ENCODE measurements at regions of chr14 and their contacts with region 1.

Region 1: DNA sequence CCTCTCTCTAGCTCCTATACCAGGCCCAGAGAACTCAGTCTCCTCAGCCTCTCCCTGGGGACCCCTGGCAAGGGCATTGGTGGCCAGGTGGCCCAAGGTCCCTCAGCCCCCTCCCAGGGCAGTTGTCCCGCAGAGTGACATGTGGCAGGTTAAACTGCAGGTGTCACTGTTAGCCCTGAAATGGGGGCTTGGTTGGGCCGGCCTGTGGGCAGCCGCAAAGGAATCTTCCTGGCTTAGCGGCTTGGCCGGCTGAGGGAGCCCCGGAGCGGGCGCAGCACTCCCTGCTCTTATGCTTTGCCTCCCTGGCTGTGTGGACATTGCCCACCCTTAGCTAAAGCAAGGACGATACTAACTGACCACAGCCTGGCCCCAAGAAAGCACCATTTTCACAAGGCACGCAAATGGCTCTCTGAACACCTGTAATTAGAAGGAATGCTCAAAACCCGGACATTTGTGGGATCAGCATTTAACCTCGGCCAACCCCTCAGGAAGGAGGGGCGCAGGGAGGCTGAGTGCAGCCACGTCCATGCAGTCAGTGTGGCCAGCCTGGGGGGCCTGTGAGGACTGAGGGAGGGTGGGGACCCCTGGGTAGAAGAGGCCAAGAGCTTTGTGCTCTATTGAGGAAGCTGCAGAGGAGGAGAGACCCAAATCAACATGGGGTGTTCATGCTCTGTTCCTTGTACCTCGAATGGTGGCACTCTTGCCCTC is 82.2 kb downstream of the PAPOLA start:
- DNase-seq: peak; percentile 43 to 85
- H3K4me3 ChIP-seq: no peak overlapping the region
- H3K27ac ChIP-seq: no peak overlapping the region
- H3K4me1 ChIP-seq: peaks cover 0 to 6% (median 0%) of the 10 kb centered on the region in 4 experiments; a peak in 2 of 7 replicates
- H3K27me3 ChIP-seq: peaks cover 0 to 3% (median 0%) of the 10 kb centered on the region in 4 experiments; a peak in 1 of 7 replicates
- CTCF ChIP-seq: peak; percentile 79 to 98 (median 93)
- EP300 ChIP-seq: no peak
- POLR2A ChIP-seq: no peak
- RAD21 ChIP-seq: peak; percentile 100

Region 2: DNA sequence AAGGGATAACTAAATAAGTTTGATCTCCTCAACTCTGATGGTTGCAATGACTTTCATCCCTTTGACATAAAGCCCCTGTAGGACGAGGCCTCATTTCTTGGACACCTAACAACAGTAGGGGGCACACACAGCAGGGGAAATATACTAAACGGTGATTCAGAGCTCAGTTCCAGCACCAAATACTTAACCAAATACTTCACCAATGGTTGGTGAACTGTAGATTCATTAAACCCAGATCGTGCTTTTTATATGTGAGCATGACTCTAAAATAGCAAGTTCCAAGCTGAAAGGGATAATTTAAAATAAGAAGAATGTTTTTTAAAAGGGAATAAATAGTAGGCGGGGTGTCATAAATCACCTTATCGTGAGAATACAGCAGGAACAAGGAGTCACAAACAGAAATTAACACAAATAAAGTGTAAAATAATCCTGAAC is 274.4 kb before region 1 on chr14:
- CTCF ChIA-PET with region 1: no interaction called
- POLR2A ChIA-PET with region 1: no interaction called
- DNase-seq: no peak
- H3K4me3 ChIP-seq: no peak overlapping the region
- H3K27ac ChIP-seq: no peak overlapping the region
- H3K4me1 ChIP-seq: no peaks in the 10 kb centered on the region
- H3K27me3 ChIP-seq: peaks cover 0 to 1% (median 0%) of the 10 kb centered on the region in 4 experiments; a peak in 1 of 7 replicates
- CTCF ChIP-seq: no peak
- EP300 ChIP-seq: no peak
- POLR2A ChIP-seq: no peak
- RAD21 ChIP-seq: no peak; a peak in 1 of 4 replicates

Region 3: GRCh38 chr14:96434040-96434787 is 150.1 kb before region 1 on chr14:
- CTCF ChIA-PET with region 1: no interaction called
- POLR2A ChIA-PET with region 1: no interaction called
- DNase-seq: no peak
- H3K4me3 ChIP-seq: no peak overlapping the region
- H3K27ac ChIP-seq: no peak overlapping the region
- H3K4me1 ChIP-seq: no peaks in the 10 kb centered on the region
- H3K27me3 ChIP-seq: no peaks in the 10 kb centered on the region
- CTCF ChIP-seq: no peak
- EP300 ChIP-seq: no peak
- POLR2A ChIP-seq: no peak
- RAD21 ChIP-seq: no peak

Region 4: GRCh38 chr14:96514694-96515093 is 69.7 kb before region 1 on chr14:
- CTCF ChIA-PET with region 1: no interaction called
- POLR2A ChIA-PET with region 1: no interaction called
- DNase-seq: no peak
- H3K4me3 ChIP-seq: no peak overlapping the region
- H3K27ac ChIP-seq: no peak overlapping the region
- H3K4me1 ChIP-seq: peaks cover 0 to 13% (median 5%) of the 10 kb centered on the region in 4 experiments; a peak in 6 of 7 replicates
- H3K27me3 ChIP-seq: no peaks in the 10 kb centered on the region
- CTCF ChIP-seq: no peak
- EP300 ChIP-seq: no peak
- POLR2A ChIP-seq: no peak
- RAD21 ChIP-seq: no peak

Region 5: DNA sequence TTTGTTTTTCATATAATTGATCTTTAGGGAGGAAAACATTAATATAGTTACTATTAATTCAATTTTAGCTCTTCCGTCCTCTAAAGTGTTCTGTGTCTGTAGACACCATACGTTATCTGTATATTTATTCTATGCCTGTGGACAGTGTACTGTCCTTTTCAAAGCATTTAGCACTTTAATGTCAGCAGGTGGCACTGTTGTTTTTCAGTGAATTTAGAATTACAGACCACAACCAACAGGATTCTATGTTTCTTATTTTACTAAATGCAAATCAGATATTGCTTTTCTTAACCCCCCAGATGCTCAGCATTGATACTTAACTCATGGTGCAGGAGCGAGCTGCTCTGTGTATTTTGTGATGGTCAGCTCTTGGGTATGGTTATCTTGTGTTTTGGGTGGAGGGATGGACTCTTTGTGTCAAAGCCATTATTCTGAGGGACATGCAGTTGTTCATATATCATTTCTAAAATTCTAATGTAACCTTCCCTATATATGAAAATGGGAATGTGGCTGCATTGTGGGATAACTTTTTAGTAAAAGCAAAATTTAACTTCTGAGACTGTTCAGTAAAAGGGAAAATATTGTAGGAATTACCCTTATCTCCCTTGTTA is 17.0 kb before region 1 on chr14:
- CTCF ChIA-PET with region 1: interaction called, 30 read pairs
- POLR2A ChIA-PET with region 1: interaction called, 13 read pairs
- DNase-seq: no peak
- H3K4me3 ChIP-seq: no peak overlapping the region
- H3K27ac ChIP-seq: no peak overlapping the region
- H3K4me1 ChIP-seq: peaks cover 2 to 5% (median 3%) of the 10 kb centered on the region in 4 experiments; a peak in 3 of 7 replicates
- H3K27me3 ChIP-seq: no peaks in the 10 kb centered on the region
- CTCF ChIP-seq: peak in 2 of 3 experiments; percentile 6 to 35; a peak in 2 of 4 replicates
- EP300 ChIP-seq: no peak
- POLR2A ChIP-seq: no peak
- RAD21 ChIP-seq: peak; percentile 28 to 37; a peak in 3 of 4 replicates

Region 6: GRCh38 chr14:96662116-96662970 is 78.0 kb after region 1 on chr14:
- CTCF ChIA-PET with region 1: interaction called, 72 read pairs
- POLR2A ChIA-PET with region 1: no interaction called
- DNase-seq: peak in 1 of 2 experiments; percentile 42
- H3K4me3 ChIP-seq: no peak overlapping the region
- H3K27ac ChIP-seq: no peak overlapping the region
- H3K4me1 ChIP-seq: peaks cover 0 to 11% (median 6%) of the 10 kb centered on the region in 4 experiments; a peak in 4 of 7 replicates
- H3K27me3 ChIP-seq: no peaks in the 10 kb centered on the region
- CTCF ChIP-seq: no peak
- EP300 ChIP-seq: no peak
- POLR2A ChIP-seq: no peak
- RAD21 ChIP-seq: no peak

Region 7: GRCh38 chr14:96676166-96676565 is 91.8 kb after region 1 on chr14:
- CTCF ChIA-PET with region 1: interaction called, 16 read pairs
- POLR2A ChIA-PET with region 1: no interaction called
- DNase-seq: no peak
- H3K4me3 ChIP-seq: no peak overlapping the region
- H3K27ac ChIP-seq: no peak overlapping the region
- H3K4me1 ChIP-seq: no peaks in the 10 kb centered on the region
- H3K27me3 ChIP-seq: peaks cover 2 to 20% (median 14%) of the 10 kb centered on the region in 4 experiments
- CTCF ChIP-seq: no peak
- EP300 ChIP-seq: no peak
- POLR2A ChIP-seq: no peak
- RAD21 ChIP-seq: no peak

Region 8: GRCh38 chr14:96741151-96741977 is 157.0 kb after region 1 on chr14:
- CTCF ChIA-PET with region 1: interaction called, 87 read pairs
- POLR2A ChIA-PET with region 1: no interaction called
- DNase-seq: peak; percentile 10 to 94
- H3K4me3 ChIP-seq: peak overlapping the region; percentile 30 to 61 (median 47)
- H3K27ac ChIP-seq: no peak overlapping the region
- H3K4me1 ChIP-seq: peaks cover 0 to 5% (median 3%) of the 10 kb centered on the region in 4 experiments
- H3K27me3 ChIP-seq: no peaks in the 10 kb centered on the region; a peak in 1 of 7 replicates
- CTCF ChIP-seq: peak; percentile 73 to 88 (median 80)
- EP300 ChIP-seq: no peak
- POLR2A ChIP-seq: no peak
- RAD21 ChIP-seq: peak; percentile 87 to 92